AG04449 (cell line): ENCODE measurements at regions of chr3 and their contacts with region 1.

Region 1: DNA sequence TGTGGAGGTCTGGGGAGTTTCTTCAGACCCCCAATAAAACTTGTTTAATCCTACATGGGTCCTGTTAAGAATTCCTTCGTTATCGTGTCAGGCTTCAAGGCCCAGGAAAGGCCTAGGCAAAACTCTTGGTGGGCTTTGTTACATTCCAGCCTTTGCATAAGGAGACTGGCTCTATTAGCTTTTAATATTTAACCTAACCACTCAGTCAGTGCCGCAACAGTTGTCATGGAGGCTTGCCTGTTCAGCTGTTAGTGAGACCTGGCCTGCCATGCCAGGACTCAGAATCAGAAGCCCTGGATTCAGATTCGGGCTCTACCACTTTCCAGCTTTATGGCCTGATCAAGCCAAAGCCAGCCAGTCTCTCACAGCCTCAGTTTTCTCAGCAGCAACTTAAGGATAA is 19.6 kb downstream of the EIF1B start:
- DNase-seq: no peak
- H3K4me3 ChIP-seq: no peak overlapping the region
- CTCF ChIP-seq: no peak

Region 2: GRCh38 chr3:40191850-40192448 is 137.1 kb before region 1 on chr3:
- CTCF ChIA-PET with region 1: interaction called, 20 read pairs
- POLR2A ChIA-PET with region 1: no interaction called
- DNase-seq: no peak
- H3K4me3 ChIP-seq: no peak overlapping the region
- CTCF ChIP-seq: peak; percentile 81

Region 3: GRCh38 chr3:40229386-40229785 is 99.7 kb before region 1 on chr3:
- CTCF ChIA-PET with region 1: no interaction called
- POLR2A ChIA-PET with region 1: no interaction called
- DNase-seq: no peak
- H3K4me3 ChIP-seq: no peak overlapping the region
- CTCF ChIP-seq: no peak

Region 4: DNA sequence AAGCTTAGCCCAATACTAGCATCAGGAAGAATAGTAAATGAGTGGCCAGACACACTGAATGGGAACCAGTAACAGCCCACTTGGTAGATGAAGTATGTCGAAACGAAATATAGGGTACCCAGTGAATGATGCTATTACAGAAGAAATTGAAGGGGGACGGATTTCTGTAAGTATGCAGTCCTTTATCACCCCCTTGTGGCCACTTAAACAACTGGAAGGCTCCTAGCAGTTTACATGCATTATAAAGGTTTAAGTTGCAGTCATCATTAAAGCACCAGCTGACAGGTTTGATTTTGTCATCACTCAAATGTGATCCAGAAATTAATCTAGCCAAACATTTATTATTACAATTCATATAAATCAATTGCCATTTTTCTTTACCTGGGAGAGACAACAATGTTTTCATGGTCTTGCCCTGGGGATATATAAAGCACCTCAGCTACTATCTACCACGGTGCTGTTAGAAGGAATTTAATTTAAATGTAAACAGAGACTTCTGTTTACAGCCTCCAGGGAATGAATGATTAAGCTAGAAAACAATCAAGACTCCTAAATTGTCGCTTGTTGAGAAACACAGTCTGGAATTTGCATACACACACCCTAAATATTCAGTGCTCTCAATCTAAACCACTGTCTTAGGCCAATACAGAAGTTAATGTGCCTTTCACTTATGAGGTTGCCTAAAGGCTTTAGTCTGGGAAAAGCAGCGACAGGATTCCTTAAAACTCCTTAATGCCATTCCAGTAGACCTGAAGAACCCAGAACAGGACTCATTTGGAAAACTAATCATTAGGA is 11.8 kb before region 1 on chr3:
- CTCF ChIA-PET with region 1: interaction called, 33 read pairs
- POLR2A ChIA-PET with region 1: interaction called, 3 read pairs
- DNase-seq: peak; percentile 28
- H3K4me3 ChIP-seq: no peak overlapping the region
- CTCF ChIP-seq: peak; percentile 66

Region 5: DNA sequence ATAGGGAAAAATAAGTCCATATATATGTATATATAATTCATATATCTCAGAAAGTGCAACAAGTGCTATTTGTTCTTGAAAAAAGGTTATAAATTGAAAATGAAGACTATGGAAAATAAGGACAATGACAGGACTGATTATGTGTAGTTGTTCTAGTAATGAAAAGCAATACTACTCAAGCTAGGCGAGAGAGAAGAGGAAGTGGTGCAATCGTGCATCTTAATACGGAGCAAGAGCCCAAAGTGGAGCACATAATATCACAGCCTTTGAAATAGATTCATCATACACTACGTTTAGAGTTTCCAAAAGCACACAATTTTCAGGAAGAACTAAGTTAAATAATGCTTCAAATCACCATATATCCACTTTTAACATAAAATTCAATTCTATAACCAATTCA is 1545.0 kb after region 1 on chr3:
- CTCF ChIA-PET with region 1: interaction called, 11 read pairs
- POLR2A ChIA-PET with region 1: no interaction called
- DNase-seq: no peak
- H3K4me3 ChIP-seq: no peak overlapping the region
- CTCF ChIP-seq: no peak

Region 6: GRCh38 chr3:41881233-41881821 is 1552.3 kb after region 1 on chr3:
- CTCF ChIA-PET with region 1: interaction called, 23 read pairs
- POLR2A ChIA-PET with region 1: no interaction called
- DNase-seq: no peak
- H3K4me3 ChIP-seq: no peak overlapping the region
- CTCF ChIP-seq: peak; percentile 44